ENCODE measurements at regions of chr9 and their contacts with region 1.

Region 1: GRCh38 chr9:130265431-130266235 is at the start of gene HMCN2:
- DNase-seq: peak; percentile 87
- H3K4me3 ChIP-seq: peak within 1 kb of the TSS in 1 of 2 experiments; percentile 39; a peak in 2 of 4 replicates
- H3K27ac ChIP-seq: no peak within 1 kb of the TSS; a peak in 1 of 4 replicates
- H3K4me1 ChIP-seq: peaks cover 0 to 32% of the 10 kb centered on the region in 2 experiments; a peak in 1 of 4 replicates
- H3K27me3 ChIP-seq: peaks cover 48% of the 10 kb centered on the region
- CTCF ChIP-seq: no peak
- EP300 ChIP-seq: no peak
- RAD21 ChIP-seq: no peak
- polyA plus RNA-seq, gene HMCN2: 0.15 and 0.28 TPM in 2 replicates

Region 2: DNA sequence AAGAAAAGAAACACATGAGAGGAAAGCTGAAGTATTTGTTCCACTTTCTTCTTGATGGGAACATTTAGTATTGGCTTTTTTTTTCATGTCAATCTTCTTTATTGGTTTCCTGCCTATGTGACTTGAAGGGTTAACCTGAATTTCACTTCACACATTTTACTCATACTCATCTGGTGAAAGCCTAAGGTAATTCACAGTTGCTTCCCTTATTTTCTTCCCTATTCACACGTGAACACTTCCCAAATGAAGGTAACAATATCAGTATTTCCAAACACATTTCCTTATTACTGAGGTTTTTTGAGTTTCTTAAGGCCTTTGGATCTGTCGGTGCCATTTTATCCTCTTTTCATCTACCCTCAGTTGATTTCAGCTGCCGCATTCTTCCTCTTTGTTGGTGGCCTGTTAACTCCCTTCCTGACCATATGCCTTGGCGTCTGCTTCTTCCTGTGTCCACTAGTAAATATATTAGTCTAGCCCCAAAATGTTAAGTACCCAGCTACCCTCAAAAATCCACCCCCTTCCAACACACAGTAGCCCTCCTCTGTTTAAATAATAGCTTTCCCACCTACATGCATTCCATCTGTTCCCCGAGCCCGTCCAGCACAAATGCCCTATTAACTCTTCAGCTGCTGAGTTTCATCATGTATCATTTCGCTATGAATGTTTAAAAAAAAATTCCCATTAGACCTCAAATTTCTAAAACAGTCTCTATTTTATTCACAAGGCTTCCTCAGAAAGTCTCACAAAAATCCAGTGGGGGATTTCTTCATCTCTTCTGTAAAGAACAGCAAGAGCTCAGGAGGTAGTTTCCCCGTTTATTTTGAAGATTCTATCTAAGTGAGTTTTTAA is 333.1 kb before region 1 on chr9:
- CTCF ChIA-PET with region 1: no interaction called
- POLR2A ChIA-PET with region 1: no interaction called
- DNase-seq: peak; percentile 8
- H3K4me3 ChIP-seq: peak overlapping the region in 1 of 2 experiments; percentile 24; a peak in 1 of 4 replicates
- H3K27ac ChIP-seq: peak overlapping the region; percentile 92
- H3K4me1 ChIP-seq: peaks cover 17 to 58% of the 10 kb centered on the region in 2 experiments
- H3K27me3 ChIP-seq: no peaks in the 10 kb centered on the region
- CTCF ChIP-seq: no peak
- EP300 ChIP-seq: no peak
- RAD21 ChIP-seq: no peak

Region 3: GRCh38 chr9:130254752-130255630 is 10.6 kb before region 1 on chr9:
- CTCF ChIA-PET with region 1: interaction called, 19 read pairs
- POLR2A ChIA-PET with region 1: no interaction called
- DNase-seq: no peak
- H3K4me3 ChIP-seq: no peak overlapping the region
- H3K27ac ChIP-seq: no peak overlapping the region
- H3K4me1 ChIP-seq: peaks cover 0 to 6% of the 10 kb centered on the region in 2 experiments; a peak in 1 of 4 replicates
- H3K27me3 ChIP-seq: no peaks in the 10 kb centered on the region; the same call in 1 of the 2 replicates
- CTCF ChIP-seq: no peak
- EP300 ChIP-seq: no peak
- RAD21 ChIP-seq: no peak

Region 4: GRCh38 chr9:130343445-130343918 is 77.8 kb after region 1 on chr9:
- CTCF ChIA-PET with region 1: interaction called, 69 read pairs
- POLR2A ChIA-PET with region 1: no interaction called
- DNase-seq: peak; percentile 88
- H3K4me3 ChIP-seq: peak overlapping the region in 1 of 2 experiments; percentile 35; a peak in 1 of 4 replicates
- H3K27ac ChIP-seq: no peak overlapping the region
- H3K4me1 ChIP-seq: peaks cover 0 to 6% of the 10 kb centered on the region in 2 experiments; a peak in 1 of 4 replicates
- H3K27me3 ChIP-seq: no peaks in the 10 kb centered on the region
- CTCF ChIP-seq: peak; percentile 89
- EP300 ChIP-seq: no peak
- RAD21 ChIP-seq: peak; percentile 83

Measured in SK-N-SH (cell line).